ENCODE measurements at regions of chr12 and their contacts with region 1.

Region 1: GRCh38 chr12:47949441-47950308 is 13.7 kb upstream of the TMEM106C start:
- DNase-seq: peak; percentile 76 to 94
- H3K4me3 ChIP-seq: no peak overlapping the region
- CTCF ChIP-seq: peak in 1 of 3 donors; percentile 68
- POLR2A ChIP-seq: no peak

Region 2: DNA sequence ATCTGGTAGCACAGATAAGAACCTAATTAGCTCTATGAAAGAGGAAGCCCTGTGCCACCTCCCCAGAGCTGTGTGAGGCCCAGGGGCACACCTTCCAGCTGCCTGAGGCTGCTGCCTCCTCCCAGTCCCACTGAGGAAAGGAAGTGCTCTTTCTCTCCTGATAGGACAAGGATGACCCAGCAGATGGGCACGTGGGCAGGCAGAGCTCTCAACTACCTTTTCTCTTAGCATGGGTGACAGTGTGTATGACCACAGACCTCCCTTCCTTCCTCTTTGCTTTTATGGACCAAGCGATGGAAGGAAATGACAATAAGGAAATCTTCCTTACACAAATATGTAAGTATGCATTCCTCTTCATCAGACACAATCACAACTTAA is 742.3 kb before region 1 on chr12:
- intact Hi-C with region 1: loop called (anchors 5 kb)
- DNase-seq: no peak
- H3K4me3 ChIP-seq: no peak overlapping the region
- CTCF ChIP-seq: no peak
- POLR2A ChIP-seq: no peak

Region 3: DNA sequence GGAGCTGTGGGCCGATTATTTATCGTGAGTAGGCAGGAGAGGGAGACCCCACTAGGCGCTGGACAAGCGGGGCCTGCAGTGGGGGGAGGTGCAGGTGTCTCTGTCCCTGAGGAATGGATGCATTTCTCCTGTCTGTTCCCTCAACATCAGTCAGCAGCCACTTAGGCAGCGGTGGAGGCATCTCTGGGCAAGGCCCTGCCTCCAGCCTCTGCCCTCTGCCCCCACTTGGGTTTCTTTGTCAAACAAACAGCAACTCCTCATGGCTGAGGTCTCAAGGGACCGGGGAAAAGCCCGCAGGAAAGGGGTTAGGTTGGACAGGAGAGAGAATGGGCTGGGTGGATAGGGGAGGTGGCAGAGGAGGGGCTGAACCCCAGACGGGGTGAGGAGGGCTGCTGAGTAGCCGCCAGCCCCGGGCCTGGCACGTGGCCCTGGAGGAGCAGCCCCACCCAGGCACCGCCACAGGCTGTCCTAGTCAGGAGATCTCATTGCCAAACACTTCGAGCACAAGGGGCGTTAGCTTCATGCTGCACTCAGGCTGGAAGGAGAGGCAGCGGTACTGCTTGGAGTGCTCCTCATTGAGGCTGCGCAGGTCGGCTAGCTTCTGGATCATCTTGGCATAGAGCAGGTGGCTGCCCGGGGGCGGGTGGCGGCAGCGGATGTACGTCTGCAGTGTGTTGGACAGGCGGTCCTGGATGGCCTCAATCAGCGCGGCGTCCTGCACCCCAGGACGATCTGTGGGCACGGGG is 105.2 kb before region 1 on chr12:
- intact Hi-C with region 1: loop called (anchors 10 kb)
- DNase-seq: peak; percentile 81 to 95
- H3K4me3 ChIP-seq: no peak overlapping the region
- CTCF ChIP-seq: no peak
- POLR2A ChIP-seq: no peak

Measured in lower leg skin (tissue), 4 donors.